ENCODE measurements at regions of chr2 and their contacts with region 1.

Region 1: GRCh38 chr2:204024503-204024902 is 87.9 kb downstream of the ICOS start:
- DNase-seq: peak; percentile 78
- H3K4me3 Mint-ChIP-seq: no peak overlapping the region
- H3K27ac Mint-ChIP-seq: no peak overlapping the region
- H3K4me1 Mint-ChIP-seq: peaks cover 51% of the 10 kb centered on the region
- H3K27me3 Mint-ChIP-seq: no peaks in the 10 kb centered on the region

Region 2: DNA sequence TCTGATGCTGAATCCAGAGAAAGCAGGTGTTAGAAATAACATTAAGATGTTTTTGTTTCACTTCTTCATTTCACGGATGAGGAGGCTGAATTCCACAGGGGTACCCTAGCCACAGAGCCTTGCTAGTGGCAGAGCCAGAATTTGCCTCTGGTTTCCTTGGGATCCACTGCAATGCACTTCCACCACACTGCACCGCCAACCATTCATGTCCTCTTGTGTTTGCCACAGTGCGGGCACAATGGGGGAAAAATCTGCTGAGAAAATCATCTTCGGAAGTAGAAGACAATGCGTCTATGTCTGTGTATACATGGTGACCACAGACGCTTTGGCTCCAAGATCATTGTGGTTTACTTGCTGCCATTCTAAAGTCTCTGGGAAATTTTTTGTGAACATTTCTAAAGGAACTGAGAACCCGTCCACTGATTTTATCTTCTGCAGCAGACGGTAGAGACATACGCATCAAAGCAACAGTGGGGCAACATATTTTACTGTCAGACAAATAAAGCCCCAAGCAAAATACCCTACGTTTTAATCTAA is 73.1 kb before region 1 on chr2:
- intact Hi-C with region 1: loop called (anchors 1 kb)
- DNase-seq: peak; percentile 84
- H3K4me3 Mint-ChIP-seq: peak overlapping the region; percentile 69
- H3K27ac Mint-ChIP-seq: peak overlapping the region; percentile 84
- H3K4me1 Mint-ChIP-seq: peaks cover 70% of the 10 kb centered on the region
- H3K27me3 Mint-ChIP-seq: no peaks in the 10 kb centered on the region

Region 3: GRCh38 chr2:203989521-203989920 is 35.0 kb before region 1 on chr2:
- intact Hi-C with region 1: loop called (anchors 1 kb)
- DNase-seq: no peak
- H3K4me3 Mint-ChIP-seq: peak overlapping the region; percentile 42
- H3K27ac Mint-ChIP-seq: peak overlapping the region; percentile 77
- H3K4me1 Mint-ChIP-seq: peaks cover 32% of the 10 kb centered on the region
- H3K27me3 Mint-ChIP-seq: no peaks in the 10 kb centered on the region

Region 4: GRCh38 chr2:204005940-204006721 is 18.4 kb before region 1 on chr2:
- intact Hi-C with region 1: loop called (anchors 1 kb)
- DNase-seq: peak; percentile 74
- H3K4me3 Mint-ChIP-seq: peak overlapping the region; percentile 39
- H3K27ac Mint-ChIP-seq: peak overlapping the region; percentile 93
- H3K4me1 Mint-ChIP-seq: peaks cover 74% of the 10 kb centered on the region
- H3K27me3 Mint-ChIP-seq: no peaks in the 10 kb centered on the region

Region 5: DNA sequence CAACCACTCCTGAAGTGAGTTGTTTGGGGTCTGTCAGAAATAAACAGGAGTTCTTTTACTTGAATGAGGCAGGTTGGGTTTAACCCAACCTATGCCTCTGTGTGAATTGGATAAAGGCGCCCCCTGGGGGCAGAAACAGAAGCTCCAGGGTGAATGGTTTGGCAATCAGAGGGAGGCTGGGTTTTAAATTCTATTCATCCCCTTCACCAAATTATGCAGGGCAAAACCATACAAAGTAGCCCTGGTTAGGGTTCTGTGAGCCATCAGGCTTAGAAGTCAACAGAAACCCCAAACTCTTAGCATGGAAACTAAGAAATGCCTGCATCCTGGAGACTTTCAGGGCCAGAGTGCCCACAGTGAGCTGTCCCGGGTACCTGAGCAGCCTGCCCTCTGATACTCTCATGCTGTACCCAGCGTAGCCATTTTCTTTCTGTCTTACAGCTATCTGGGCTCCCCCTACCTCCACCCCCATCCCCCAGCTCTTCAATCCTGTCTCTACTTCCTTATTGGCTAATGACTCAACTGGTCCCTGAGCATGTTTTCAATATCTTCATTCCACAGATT is 153.6 kb after region 1 on chr2:
- intact Hi-C with region 1: loop called (anchors 1 kb)
- DNase-seq: peak; percentile 90
- H3K4me3 Mint-ChIP-seq: no peak overlapping the region
- H3K27ac Mint-ChIP-seq: no peak overlapping the region
- H3K4me1 Mint-ChIP-seq: peaks cover 7% of the 10 kb centered on the region
- H3K27me3 Mint-ChIP-seq: peaks cover 32% of the 10 kb centered on the region